Calu3 (cell line): ENCODE measurements at regions of chr10 and their contacts with region 1.

Region 1: DNA sequence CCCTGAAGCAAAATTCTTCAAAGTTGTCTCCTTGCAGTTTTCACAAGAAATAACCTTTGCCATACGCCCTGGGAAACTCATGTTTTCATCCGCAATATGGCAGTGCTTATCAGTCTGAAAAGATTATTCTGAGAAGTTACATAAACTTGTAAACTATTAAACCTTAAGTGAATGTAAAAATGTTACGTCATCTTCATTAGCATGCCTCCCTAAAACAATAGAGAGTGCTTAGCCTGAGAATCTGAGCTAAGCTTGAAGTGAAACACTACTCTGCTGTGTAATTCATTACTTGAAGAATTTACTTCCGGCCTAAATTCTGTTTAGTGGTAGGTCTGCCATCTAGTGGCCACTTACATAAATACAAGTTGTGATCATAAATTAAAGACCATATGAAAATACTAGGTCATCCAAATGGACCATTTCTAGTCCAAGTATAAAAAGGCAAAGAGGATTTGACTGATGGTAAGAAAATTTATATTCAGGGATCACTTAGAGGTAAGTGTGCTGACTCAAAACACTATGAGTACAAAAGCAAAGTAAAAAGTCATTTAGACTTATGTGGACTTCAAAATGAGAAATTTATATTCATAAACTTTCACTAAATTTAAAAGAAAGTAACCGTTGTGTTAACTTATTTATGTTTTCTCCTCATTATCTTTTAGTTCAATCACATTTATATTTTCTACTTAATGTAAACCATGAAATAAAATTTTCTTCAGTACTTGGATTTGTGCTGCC is 745.1 kb upstream of the LRRTM3 start:
- DNase-seq: peak; percentile 36
- H3K4me3 Mint-ChIP-seq: no peak overlapping the region
- H3K27ac Mint-ChIP-seq: no peak overlapping the region
- H3K4me1 Mint-ChIP-seq: peaks cover 9% of the 10 kb centered on the region
- H3K27me3 Mint-ChIP-seq: no peaks in the 10 kb centered on the region
- CTCF ChIP-seq: peak; percentile 36

Region 2: DNA sequence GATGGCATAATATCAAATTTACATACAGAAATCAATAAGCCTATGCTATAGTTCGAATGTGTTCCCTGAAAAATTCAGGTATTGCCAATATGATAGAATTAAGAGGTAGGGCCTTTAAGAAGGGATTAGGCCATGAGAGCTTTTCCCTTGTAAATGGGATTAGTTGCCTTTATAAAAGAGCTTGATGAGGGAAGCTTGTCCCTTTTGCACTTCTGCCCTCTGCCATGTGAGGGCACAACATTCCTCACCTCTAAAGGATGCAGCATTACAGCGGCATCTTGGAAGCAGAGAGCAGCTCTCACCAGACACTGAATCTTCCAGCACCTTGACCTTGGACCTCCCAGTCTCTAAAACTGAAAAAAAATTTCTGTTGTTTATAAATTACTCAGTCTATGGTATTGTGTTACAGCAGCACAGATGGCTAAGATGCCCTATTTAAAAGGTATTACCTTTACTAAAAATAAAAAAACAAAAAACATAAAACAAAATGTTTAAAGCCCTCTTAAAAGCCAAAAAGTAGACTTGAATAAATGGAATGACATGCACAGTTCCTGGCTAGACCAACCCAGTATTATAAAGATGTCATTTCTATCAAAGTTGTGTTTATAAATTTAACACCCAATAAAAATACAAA is 1749.9 kb before region 1 on chr10:
- CTCF ChIA-PET with region 1: no interaction called
- intact Hi-C with region 1: loop called (anchors 10 kb)
- DNase-seq: peak; percentile 74
- H3K4me3 Mint-ChIP-seq: no peak overlapping the region
- H3K27ac Mint-ChIP-seq: no peak overlapping the region
- H3K4me1 Mint-ChIP-seq: peaks cover 8% of the 10 kb centered on the region
- H3K27me3 Mint-ChIP-seq: no peaks in the 10 kb centered on the region
- CTCF ChIP-seq: peak; percentile 79

Region 3: DNA sequence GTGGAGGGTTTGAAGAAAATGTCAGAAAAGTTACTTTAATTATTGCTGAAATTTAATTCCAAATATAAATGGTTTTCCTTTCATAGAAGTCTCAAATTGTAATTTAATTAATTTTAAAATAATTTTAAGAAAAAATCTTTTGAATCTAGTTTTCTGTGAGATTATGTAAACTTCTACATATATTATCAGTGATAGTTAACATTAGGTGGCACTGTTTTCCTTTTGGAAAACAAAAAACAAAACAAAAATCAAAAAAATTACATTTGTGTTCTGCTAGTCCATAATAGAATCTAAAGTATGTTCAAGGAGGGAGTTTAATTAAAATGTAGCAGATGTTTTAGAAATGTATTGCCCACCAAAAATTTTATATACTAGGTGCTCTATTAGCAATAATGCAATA is 1202.8 kb before region 1 on chr10:
- CTCF ChIA-PET with region 1: no interaction called
- intact Hi-C with region 1: loop called (anchors 5 kb)
- DNase-seq: no peak
- H3K4me3 Mint-ChIP-seq: no peak overlapping the region
- H3K27ac Mint-ChIP-seq: no peak overlapping the region
- H3K4me1 Mint-ChIP-seq: no peaks in the 10 kb centered on the region
- H3K27me3 Mint-ChIP-seq: no peaks in the 10 kb centered on the region
- CTCF ChIP-seq: no peak

Region 4: DNA sequence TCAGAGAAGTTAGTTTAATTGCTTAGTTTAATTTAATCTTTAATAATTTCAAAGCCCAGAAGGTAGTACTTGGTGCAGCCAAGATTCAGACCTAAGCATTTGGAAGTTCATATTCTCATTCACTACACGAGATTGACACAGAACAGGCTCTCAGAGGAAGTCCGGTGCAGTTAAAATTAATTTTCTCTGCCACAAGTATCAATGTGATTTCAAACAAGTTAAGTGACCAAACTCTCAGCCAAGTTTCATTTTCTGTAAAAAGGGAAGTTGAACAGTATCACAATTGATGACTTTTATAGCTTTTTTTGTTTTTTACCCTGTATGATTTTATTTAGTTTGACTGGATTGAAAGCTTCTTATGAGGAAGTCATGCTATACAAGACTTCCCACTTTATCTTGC is 749.8 kb before region 1 on chr10:
- CTCF ChIA-PET with region 1: no interaction called
- intact Hi-C with region 1: loop called (anchors 10 kb)
- DNase-seq: no peak
- H3K4me3 Mint-ChIP-seq: no peak overlapping the region
- H3K27ac Mint-ChIP-seq: no peak overlapping the region
- H3K4me1 Mint-ChIP-seq: no peaks in the 10 kb centered on the region
- H3K27me3 Mint-ChIP-seq: no peaks in the 10 kb centered on the region
- CTCF ChIP-seq: no peak

Region 5: DNA sequence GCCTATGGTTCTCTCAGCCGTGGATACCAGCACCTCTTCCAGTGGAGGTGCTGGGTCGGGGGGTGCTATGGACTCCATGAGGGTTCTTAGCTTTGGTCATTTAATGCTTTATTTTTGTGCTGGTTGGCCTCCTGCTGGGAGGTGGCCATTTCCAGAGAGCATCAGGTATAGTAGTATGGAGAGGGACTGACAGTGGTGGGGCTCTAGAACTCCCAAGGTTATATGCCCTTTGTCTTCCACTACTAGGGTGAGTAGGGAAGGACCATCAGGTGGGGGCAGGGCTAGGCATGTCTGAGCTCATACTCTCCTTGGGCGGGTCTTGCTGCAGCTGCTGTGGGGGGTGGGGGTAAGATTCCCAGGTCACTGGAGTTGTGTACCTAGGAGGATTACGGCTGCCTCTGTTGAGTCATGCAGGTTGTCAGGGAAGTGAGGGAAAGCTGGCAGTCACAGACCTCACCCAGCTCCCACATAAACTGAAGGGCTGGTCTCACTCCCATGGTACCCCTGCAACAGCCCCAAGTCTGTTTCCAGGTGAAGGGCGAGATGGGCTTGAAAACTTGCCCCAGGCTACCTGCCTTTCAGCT is 18.1 kb before region 1 on chr10:
- CTCF ChIA-PET with region 1: no interaction called
- intact Hi-C with region 1: no loop called
- DNase-seq: no peak
- H3K4me3 Mint-ChIP-seq: no peak overlapping the region
- H3K27ac Mint-ChIP-seq: no peak overlapping the region
- H3K4me1 Mint-ChIP-seq: no peaks in the 10 kb centered on the region
- H3K27me3 Mint-ChIP-seq: no peaks in the 10 kb centered on the region
- CTCF ChIP-seq: no peak

Region 6: GRCh38 chr10:66222462-66223046 is 41.8 kb after region 1 on chr10:
- CTCF ChIA-PET with region 1: interaction called, 11 read pairs
- intact Hi-C with region 1: no loop called
- DNase-seq: no peak
- H3K4me3 Mint-ChIP-seq: no peak overlapping the region
- H3K27ac Mint-ChIP-seq: no peak overlapping the region
- H3K4me1 Mint-ChIP-seq: no peaks in the 10 kb centered on the region
- H3K27me3 Mint-ChIP-seq: no peaks in the 10 kb centered on the region
- CTCF ChIP-seq: no peak

Region 7: DNA sequence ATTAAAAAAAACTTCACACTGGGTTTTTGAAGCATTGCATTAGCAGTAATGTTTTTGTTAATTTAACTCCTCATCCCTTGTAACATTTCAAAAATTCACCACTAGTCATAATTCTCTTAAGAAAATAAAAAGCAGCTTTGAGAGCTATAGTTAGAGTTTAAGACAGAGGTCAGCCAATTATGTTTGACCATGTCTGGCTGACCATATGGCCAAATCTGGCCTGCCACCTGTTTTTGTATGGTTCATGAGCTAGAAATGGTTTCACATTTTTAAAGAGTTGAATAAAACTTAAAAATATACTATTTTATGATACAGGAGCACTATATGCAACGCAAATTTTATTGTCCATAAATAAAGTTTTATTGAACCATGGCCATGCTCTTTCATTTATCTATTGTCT is 672.1 kb after region 1 on chr10:
- CTCF ChIA-PET with region 1: no interaction called
- intact Hi-C with region 1: no loop called
- DNase-seq: no peak
- H3K4me3 Mint-ChIP-seq: no peak overlapping the region
- H3K27ac Mint-ChIP-seq: no peak overlapping the region
- H3K4me1 Mint-ChIP-seq: no peaks in the 10 kb centered on the region
- H3K27me3 Mint-ChIP-seq: no peaks in the 10 kb centered on the region
- CTCF ChIP-seq: no peak